Activated CD4-positive, alpha-beta memory T cell treated with anti-CD3 and anti-CD28 coated beads for 36 hours (primary cell): ENCODE measurements at regions of chr16 and their contacts with region 1.

Region 1: GRCh38 chr16:28924732-28925385 is at the start of gene RABEP2:
- DNase-seq: peak; percentile 97
- H3K4me3 Mint-ChIP-seq: peak within 1 kb of the TSS; percentile 94
- H3K27ac Mint-ChIP-seq: peak within 1 kb of the TSS; percentile 98
- H3K4me1 Mint-ChIP-seq: peaks cover 9% of the 10 kb centered on the region
- H3K27me3 Mint-ChIP-seq: no peaks in the 10 kb centered on the region
- total RNA-seq, gene RABEP2: 11.3 to 12.0 TPM

Region 2: GRCh38 chr16:28879841-28880588 is 44.8 kb before region 1 on chr16:
- CTCF ChIA-PET with region 1: no interaction called
- POLR2A ChIA-PET with region 1: interaction called, 4 read pairs
- intact Hi-C with region 1: loop called (anchors 5 kb)
- DNase-seq: peak; percentile 96
- H3K4me3 Mint-ChIP-seq: peak overlapping the region; percentile 88
- H3K27ac Mint-ChIP-seq: peak overlapping the region; percentile 13
- H3K4me1 Mint-ChIP-seq: peaks cover 20% of the 10 kb centered on the region
- H3K27me3 Mint-ChIP-seq: peaks cover 7% of the 10 kb centered on the region

Region 3: DNA sequence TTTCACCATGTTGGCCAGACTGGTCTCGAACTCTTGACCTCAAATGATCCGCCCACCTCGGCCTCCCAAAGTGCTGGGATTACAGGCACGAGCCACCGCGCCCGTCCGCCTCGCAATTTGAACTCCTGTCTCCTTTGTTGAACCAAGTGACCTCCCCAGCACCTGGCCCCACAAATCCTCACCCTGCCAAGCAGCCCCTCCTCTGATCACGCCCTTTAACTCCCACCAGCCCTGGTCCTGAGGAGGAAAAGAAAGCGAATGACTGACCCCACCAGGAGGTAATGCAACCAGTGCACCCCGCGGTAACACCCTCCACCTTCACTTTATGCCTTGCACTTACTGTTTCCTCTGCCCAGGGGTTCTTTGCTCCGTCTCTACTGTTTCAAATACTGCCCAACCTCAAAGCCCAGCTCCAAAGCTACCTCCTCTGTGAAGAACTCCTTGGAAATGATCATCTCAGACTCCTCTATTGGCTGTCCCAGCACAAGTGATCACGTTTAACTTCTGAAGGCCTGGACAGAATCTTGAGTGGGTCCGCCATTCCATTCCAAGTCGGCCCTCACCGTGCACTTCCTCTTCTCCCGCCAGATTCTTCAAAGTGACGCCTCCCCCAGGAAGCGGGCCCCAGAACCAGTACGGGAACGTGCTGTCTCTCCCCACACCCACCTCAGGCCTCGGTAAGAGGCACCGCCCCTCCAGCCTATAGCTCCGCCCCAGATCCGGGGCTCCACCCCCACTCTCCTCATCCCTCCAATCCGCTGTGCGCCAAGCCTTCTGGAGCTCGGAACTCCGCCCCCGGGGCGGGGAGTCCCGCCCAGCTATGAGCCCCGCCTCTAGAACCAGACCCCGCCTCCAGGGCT is 11.3 kb after region 1 on chr16:
- CTCF ChIA-PET with region 1: interaction called, 4 read pairs
- POLR2A ChIA-PET with region 1: no interaction called
- intact Hi-C with region 1: loop called (anchors 1 kb)
- DNase-seq: peak; percentile 92
- H3K4me3 Mint-ChIP-seq: peak overlapping the region; percentile 56
- H3K27ac Mint-ChIP-seq: no peak overlapping the region
- H3K4me1 Mint-ChIP-seq: peaks cover 10% of the 10 kb centered on the region
- H3K27me3 Mint-ChIP-seq: no peaks in the 10 kb centered on the region